ENCODE measurements at regions of chr2 and their contacts with region 1.

Region 1: DNA sequence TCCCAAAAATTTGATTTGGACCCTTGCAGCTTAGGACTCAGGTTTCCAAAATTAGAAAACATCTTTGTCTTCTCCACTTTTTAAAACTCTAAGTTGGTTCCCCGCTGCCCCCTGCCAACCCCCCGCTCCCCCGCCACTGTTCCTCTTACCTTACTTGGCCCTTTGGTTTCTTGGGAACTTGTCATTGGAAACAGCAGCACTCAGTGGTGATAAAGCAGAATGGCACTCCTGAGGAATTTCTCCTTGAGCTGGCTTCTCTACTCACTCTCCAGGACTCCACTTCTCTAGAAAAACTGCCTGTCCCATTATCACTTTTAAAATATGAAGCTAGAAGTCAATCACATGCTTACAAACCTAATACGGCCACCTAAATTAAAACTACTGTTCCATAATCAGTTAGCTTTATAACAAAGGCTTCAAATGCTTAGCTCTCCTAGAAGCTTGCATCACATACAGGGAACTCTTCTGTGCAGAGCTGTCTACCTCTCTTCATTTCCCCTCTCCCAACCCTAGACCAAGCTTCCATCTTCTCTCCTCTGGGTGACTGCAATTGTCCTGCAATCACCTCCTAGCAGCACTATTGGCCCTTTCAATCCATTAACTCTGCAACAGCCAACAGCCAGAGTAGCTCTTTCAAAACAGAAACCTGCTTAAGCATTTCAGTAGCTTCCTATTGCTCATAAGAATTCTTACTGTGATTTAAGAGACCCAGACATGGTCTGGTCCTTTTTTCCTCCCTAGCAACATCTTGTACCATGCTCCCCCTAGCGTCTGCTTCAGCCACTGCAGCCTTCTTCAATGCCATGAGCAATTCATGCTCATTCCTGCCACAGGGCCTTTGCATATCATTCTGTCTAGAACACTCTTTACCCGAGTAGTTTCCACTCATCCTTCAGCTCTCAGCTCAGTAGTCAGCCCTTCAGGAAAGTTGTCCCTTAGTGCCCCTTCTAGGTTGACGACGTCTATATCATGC is 15.2 kb upstream of the PLEKHM3 start:
- DNase-seq: peak; percentile 89
- ATAC-seq: peak; percentile 95
- H3K4me3 Mint-ChIP-seq: no peak overlapping the region
- H3K27ac Mint-ChIP-seq: no peak overlapping the region
- H3K4me1 Mint-ChIP-seq: peaks cover 2% of the 10 kb centered on the region
- H3K27me3 Mint-ChIP-seq: no peaks in the 10 kb centered on the region
- CTCF ChIP-seq: peak; percentile 87

Region 2: DNA sequence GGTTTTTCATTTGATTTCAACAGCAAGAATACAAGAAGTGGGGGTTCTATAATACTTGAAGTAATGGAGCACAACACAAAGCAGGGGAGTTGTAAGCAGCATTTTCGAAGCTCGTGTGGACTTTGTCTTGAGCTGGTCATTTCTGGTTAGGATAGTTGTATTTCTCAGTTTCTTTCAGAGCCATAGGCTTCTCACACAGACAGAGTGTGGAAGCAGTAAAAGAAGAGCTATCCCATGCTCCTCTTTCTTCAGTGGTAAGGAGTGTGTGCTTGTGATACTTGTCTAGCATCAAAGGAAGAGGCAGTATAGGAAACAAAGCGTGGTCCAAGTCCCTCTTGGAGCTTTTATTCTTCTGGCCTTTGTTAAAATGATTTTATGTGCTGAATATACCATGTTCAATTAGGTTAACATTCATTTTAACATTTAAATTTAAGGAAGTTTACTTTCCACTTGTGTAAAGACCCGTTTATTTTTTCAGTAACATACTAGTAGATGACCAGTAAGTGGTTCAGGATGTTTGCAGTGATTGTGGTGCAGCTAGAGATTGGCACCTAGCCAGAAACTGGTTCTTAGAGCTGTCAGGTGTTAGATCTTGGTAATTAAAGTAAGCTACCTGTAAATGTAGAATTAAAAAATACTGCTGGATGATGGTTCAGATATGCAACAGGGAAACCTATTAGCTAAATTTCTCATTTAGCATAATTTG is 314.5 kb before region 1 on chr2:
- CTCF ChIA-PET with region 1: interaction called, 11 read pairs
- POLR2A ChIA-PET with region 1: no interaction called
- intact Hi-C with region 1: no loop called
- DNase-seq: no peak
- ATAC-seq: no peak
- H3K4me3 Mint-ChIP-seq: no peak overlapping the region
- H3K27ac Mint-ChIP-seq: no peak overlapping the region
- H3K4me1 Mint-ChIP-seq: peaks cover 43% of the 10 kb centered on the region
- H3K27me3 Mint-ChIP-seq: no peaks in the 10 kb centered on the region
- CTCF ChIP-seq: no peak

Region 3: GRCh38 chr2:207746131-207746530 is 294.4 kb before region 1 on chr2:
- CTCF ChIA-PET with region 1: interaction called, 168 read pairs
- POLR2A ChIA-PET with region 1: no interaction called
- intact Hi-C with region 1: loop called (anchors 1 kb)
- DNase-seq: peak; percentile 44
- ATAC-seq: peak; percentile 81
- H3K4me3 Mint-ChIP-seq: no peak overlapping the region
- H3K27ac Mint-ChIP-seq: no peak overlapping the region
- H3K4me1 Mint-ChIP-seq: no peaks in the 10 kb centered on the region
- H3K27me3 Mint-ChIP-seq: no peaks in the 10 kb centered on the region
- CTCF ChIP-seq: peak; percentile 85

Region 4: DNA sequence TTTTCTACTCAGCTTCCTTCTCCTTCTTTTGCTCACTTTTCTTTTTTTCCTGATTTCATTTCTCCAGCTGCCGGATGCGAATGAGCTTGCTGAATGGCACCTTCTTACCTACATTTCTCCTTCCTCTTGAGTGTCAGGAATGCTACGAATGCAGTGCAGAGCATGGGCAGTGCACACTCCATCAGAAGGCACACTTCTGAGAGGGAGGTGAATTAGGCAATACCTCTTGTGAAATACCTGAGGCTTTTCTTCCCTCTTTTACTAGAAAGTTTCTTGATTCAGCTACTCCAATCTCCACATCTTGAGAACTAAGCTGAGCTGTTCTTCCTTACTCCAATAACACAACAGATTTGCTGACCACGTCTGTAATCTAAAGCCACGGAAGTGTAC is 66.3 kb before region 1 on chr2:
- CTCF ChIA-PET with region 1: interaction called, 20 read pairs
- POLR2A ChIA-PET with region 1: no interaction called
- intact Hi-C with region 1: no loop called
- DNase-seq: no peak
- ATAC-seq: no peak
- H3K4me3 Mint-ChIP-seq: no peak overlapping the region
- H3K27ac Mint-ChIP-seq: no peak overlapping the region
- H3K4me1 Mint-ChIP-seq: peaks cover 15% of the 10 kb centered on the region
- H3K27me3 Mint-ChIP-seq: no peaks in the 10 kb centered on the region
- CTCF ChIP-seq: no peak

Region 5: GRCh38 chr2:208025037-208025813 is 15.3 kb before region 1 on chr2 and contains the start of gene PLEKHM3:
- CTCF ChIA-PET with region 1: interaction called, 34 read pairs
- POLR2A ChIA-PET with region 1: no interaction called
- intact Hi-C with region 1: no loop called
- DNase-seq: peak; percentile 82
- ATAC-seq: peak; percentile 86
- H3K4me3 Mint-ChIP-seq: peak within 1 kb of the TSS; percentile 83
- H3K27ac Mint-ChIP-seq: peak within 1 kb of the TSS; percentile 93
- H3K4me1 Mint-ChIP-seq: peaks cover 18% of the 10 kb centered on the region
- H3K27me3 Mint-ChIP-seq: no peaks in the 10 kb centered on the region
- CTCF ChIP-seq: no peak
- total RNA-seq, gene PLEKHM3: 4.5 to 4.7 TPM

Region 6: DNA sequence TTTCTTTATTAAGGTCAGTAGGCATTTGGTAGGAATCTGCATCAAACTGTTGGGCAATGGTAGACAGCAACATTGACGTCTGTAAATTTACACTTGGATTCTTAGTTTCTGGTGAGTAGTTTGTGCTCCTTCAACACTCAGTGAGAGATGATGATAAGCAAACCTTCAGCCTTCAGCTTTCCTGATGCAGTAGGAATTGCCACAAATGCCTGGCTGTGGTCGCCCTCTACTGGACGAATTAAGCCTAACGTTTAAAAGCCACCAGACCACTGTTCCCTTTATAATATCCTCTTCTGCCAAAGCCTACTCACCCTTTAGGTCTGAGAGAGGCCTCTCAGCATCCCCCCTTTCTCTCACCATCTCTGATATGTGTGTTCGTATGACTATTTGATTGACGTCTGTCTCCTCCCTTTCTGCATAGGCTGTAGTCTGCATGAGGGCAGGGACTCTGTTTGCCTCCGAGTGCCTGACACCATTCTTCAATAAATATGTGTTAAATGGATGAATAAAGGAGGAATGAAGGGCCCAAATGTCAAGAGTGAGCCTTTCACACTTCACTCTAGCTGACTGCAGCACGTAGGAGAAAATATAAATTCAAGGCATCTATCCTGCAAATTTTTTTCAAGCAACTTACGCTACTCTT is 31.9 kb after region 1 on chr2:
- CTCF ChIA-PET with region 1: interaction called, 19 read pairs
- POLR2A ChIA-PET with region 1: no interaction called
- intact Hi-C with region 1: no loop called
- DNase-seq: peak; percentile 71
- ATAC-seq: peak; percentile 74
- H3K4me3 Mint-ChIP-seq: no peak overlapping the region
- H3K27ac Mint-ChIP-seq: no peak overlapping the region
- H3K4me1 Mint-ChIP-seq: no peaks in the 10 kb centered on the region
- H3K27me3 Mint-ChIP-seq: peaks cover 4% of the 10 kb centered on the region
- CTCF ChIP-seq: peak; percentile 81

Region 7: GRCh38 chr2:208134928-208135586 is 94.6 kb after region 1 on chr2:
- CTCF ChIA-PET with region 1: no interaction called
- POLR2A ChIA-PET with region 1: no interaction called
- intact Hi-C with region 1: no loop called
- DNase-seq: peak; percentile 53
- ATAC-seq: peak; percentile 89
- H3K4me3 Mint-ChIP-seq: no peak overlapping the region
- H3K27ac Mint-ChIP-seq: peak overlapping the region; percentile 35
- H3K4me1 Mint-ChIP-seq: peaks cover 10% of the 10 kb centered on the region
- H3K27me3 Mint-ChIP-seq: no peaks in the 10 kb centered on the region
- CTCF ChIP-seq: no peak